Kidney (tissue), 22 donors: ENCODE measurements at regions of chr22 and their contacts with region 1.

Region 1: GRCh38 chr22:43036282-43036829 is 21.4 kb upstream of the PACSIN2 start:
- DNase-seq: peak in 4 of 5 donors; percentile 16 to 85 (median 58)
- H3K4me3 ChIP-seq: no peak overlapping the region
- H3K27ac ChIP-seq: no peak overlapping the region
- H3K4me1 ChIP-seq: no peaks in the 10 kb centered on the region
- H3K27me3 ChIP-seq: no peaks in the 10 kb centered on the region
- CTCF ChIP-seq: no peak

Region 2: DNA sequence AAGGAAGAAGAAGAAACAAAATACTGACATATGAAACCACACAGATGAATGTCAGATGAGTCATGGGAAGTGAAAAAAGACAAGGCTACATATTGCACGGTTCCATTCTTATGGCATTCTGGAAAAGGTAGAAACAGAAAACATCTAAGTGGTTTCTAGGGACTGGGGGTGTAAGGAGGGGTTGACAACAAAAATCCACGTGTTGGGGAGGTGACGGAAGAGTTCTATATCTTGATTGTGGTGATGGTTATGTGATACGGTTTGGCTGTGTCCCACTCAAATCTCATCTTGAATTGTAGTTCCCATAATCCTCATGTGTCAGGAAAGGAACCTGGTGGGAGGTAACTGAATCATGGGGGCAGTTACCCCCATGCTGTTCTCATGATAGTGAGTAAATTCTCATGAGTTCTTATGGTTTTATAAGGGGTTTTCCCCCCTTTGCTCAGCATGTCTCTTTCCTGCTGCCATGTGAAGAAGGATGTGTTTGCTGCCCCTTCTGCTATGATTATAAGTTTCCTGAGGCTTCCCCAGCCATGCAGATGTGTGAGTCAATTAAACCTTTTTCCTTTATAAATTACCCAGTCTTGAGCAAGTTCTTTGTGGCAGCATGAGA is 172.9 kb before region 1 on chr22:
- intact Hi-C with region 1: loop called (anchors 10 kb)
- DNase-seq: no peak
- H3K4me3 ChIP-seq: no peak overlapping the region
- H3K27ac ChIP-seq: no peak overlapping the region
- H3K4me1 ChIP-seq: peaks cover 0 to 6% (median 3%) of the 10 kb centered on the region in 3 donors
- H3K27me3 ChIP-seq: no peaks in the 10 kb centered on the region
- CTCF ChIP-seq: no peak

Region 3: GRCh38 chr22:43244402-43244801 is 208.0 kb after region 1 on chr22:
- intact Hi-C with region 1: no loop called
- DNase-seq: no peak
- H3K4me3 ChIP-seq: no peak overlapping the region
- H3K27ac ChIP-seq: no peak overlapping the region
- H3K4me1 ChIP-seq: no peaks in the 10 kb centered on the region
- H3K27me3 ChIP-seq: no peaks in the 10 kb centered on the region
- CTCF ChIP-seq: no peak